CD8-positive, alpha-beta T cell (primary cell): ENCODE measurements at regions of chr7 and their contacts with region 1.

Region 1: GRCh38 chr7:30564243-30564892 is 30.3 kb upstream of the GARS1 start:
- DNase-seq: peak; percentile 60 to 83 (median 76)
- ATAC-seq: peak; percentile 95
- H3K4me3 ChIP-seq: no peak overlapping the region
- H3K4me3 Mint-ChIP-seq: no peak overlapping the region
- H3K27ac ChIP-seq: no peak overlapping the region
- H3K27ac Mint-ChIP-seq: peak overlapping the region; percentile 37
- H3K4me1 ChIP-seq: no peaks in the 10 kb centered on the region
- H3K4me1 Mint-ChIP-seq: no peaks in the 10 kb centered on the region
- H3K27me3 ChIP-seq: no peaks in the 10 kb centered on the region
- H3K27me3 Mint-ChIP-seq: no peaks in the 10 kb centered on the region
- CTCF ChIP-seq: peak; percentile 74

Region 2: DNA sequence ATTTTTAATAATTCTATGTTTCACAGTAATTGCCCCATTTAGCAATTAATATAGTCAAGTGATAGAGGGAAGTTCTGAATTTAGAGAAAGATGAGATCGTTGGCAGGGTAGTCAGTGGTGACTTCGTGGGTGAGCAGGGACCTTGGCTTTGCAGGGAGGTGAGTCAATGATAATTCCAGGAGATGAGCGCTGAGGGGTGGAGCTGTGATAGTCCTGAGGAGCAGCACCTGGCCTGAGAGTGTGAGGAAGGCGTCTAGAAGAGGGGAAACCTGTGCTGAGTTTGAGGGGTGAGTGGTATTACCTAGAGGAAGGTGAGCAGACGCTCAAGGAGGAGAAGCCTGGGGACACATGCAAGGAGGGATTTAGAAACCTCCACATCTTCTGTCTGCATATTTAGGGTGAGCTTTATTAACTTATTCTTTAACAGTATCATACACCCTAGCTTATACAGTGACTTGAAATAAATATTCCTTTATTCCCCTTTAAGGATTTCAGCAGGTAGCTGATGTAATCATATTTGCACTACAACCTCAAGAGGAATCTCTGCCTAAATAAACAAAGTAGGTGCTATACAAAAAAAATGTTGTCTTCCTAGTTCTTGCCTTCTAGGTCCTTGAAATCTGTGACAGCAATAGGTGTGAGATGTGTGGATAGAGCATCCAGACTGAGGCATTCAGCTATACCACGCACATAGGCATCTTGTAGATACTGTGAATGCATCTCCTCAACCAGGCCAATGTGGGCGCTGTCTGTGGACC is 1604.1 kb before region 1 on chr7:
- CTCF ChIA-PET with region 1: no interaction called
- POLR2A ChIA-PET with region 1: no interaction called
- intact Hi-C with region 1: loop called in 1 of 2 experiments (anchors 5 kb)
- DNase-seq: no peak
- ATAC-seq: no peak
- H3K4me3 ChIP-seq: no peak overlapping the region
- H3K4me3 Mint-ChIP-seq: no peak overlapping the region
- H3K27ac ChIP-seq: no peak overlapping the region
- H3K27ac Mint-ChIP-seq: no peak overlapping the region
- H3K4me1 ChIP-seq: peaks cover 6% of the 10 kb centered on the region
- H3K4me1 Mint-ChIP-seq: peaks cover 14% of the 10 kb centered on the region
- H3K27me3 ChIP-seq: peaks cover 5 to 14% of the 10 kb centered on the region in 2 experiments
- H3K27me3 Mint-ChIP-seq: peaks cover 32% of the 10 kb centered on the region
- CTCF ChIP-seq: no peak

Region 3: DNA sequence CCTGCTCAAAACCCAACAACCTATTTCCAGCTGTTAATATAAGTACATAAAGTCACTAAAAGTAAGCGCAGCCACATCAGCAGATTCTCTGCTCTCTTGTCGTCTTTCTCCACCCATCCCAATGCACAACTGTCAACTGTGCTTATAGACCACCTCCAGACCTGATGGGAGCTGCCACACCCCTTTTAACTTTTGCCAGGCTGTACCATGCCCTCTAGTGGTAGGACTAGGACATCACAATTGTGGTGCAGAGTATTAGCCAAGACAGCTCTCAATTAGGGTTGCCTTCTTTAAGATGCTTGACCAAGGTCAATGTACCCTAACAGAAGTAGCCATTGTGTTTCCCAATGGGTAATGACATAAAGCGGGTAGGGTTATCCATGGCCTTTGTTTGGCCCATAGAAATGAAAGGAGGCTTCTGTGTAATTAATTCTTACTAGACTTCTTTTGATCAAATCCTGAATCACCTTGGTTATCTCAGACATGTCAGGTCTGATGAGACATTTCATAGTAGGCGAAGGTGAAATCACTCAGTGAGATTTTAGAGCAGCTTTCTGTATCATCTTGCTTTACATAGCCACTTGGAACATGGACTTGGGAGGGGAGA is 642.9 kb before region 1 on chr7:
- CTCF ChIA-PET with region 1: no interaction called
- POLR2A ChIA-PET with region 1: no interaction called
- intact Hi-C with region 1: loop called (anchors 5 kb)
- DNase-seq: peak in 8 of 9 experiments; percentile 6 to 67 (median 40)
- ATAC-seq: peak; percentile 92
- H3K4me3 ChIP-seq: no peak overlapping the region
- H3K4me3 Mint-ChIP-seq: no peak overlapping the region
- H3K27ac ChIP-seq: no peak overlapping the region
- H3K27ac Mint-ChIP-seq: no peak overlapping the region
- H3K4me1 ChIP-seq: no peaks in the 10 kb centered on the region
- H3K4me1 Mint-ChIP-seq: no peaks in the 10 kb centered on the region
- H3K27me3 ChIP-seq: peaks cover 0 to 2% of the 10 kb centered on the region in 2 experiments
- H3K27me3 Mint-ChIP-seq: no peaks in the 10 kb centered on the region
- CTCF ChIP-seq: peak; percentile 90

Region 4: GRCh38 chr7:30164567-30164966 is 399.8 kb before region 1 on chr7:
- CTCF ChIA-PET with region 1: no interaction called
- POLR2A ChIA-PET with region 1: no interaction called
- intact Hi-C with region 1: loop called (anchors 2 to 5 kb)
- DNase-seq: peak in 2 of 9 experiments; percentile 40 to 53
- ATAC-seq: no peak
- H3K4me3 ChIP-seq: no peak overlapping the region
- H3K4me3 Mint-ChIP-seq: no peak overlapping the region
- H3K27ac ChIP-seq: no peak overlapping the region
- H3K27ac Mint-ChIP-seq: no peak overlapping the region
- H3K4me1 ChIP-seq: peaks cover 25% of the 10 kb centered on the region
- H3K4me1 Mint-ChIP-seq: peaks cover 32% of the 10 kb centered on the region
- H3K27me3 ChIP-seq: no peaks in the 10 kb centered on the region
- H3K27me3 Mint-ChIP-seq: no peaks in the 10 kb centered on the region
- CTCF ChIP-seq: peak; percentile 15

Region 5: DNA sequence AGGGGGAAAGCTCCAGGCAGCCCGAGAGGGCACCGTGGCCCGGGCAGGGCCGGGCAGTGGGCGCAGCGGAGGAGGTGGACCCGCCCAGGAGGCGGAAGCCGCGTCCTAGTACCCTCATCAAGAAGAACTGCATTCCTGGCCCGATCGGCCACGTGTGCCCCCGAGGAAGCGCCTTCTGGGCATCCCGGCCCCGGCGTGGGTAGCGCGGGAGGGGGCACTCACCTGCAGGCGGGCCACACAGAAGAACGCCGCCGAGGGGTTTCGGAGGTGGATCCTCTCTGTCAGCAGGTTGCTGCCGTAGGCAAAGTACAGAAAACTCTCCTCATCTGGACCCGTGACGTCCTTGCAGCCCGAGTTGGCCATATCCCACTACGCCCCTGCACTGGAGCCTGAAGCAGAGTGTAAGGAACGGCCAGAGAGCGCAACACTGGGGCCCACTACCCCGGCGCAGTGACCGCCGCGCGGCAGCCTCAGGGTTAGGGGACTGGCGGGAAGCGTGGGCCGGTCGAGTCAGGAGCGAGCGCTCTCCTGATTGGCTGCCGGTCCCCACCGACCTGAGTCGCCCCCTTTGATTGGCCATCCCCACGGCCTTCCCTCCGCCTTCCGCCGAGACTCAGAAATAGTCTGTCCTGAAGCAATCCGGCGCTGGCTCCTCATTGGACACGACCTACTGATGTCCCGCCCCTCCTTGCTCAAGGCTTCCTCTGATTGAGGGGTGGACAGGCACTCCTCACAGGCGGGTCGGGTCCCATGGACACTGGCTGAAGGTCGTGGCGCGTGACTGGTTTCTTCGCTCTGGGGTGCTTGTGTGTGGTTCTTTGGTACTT is 59.8 kb before region 1 on chr7 and contains the start of gene GGCT:
- CTCF ChIA-PET with region 1: interaction called, 6 read pairs
- POLR2A ChIA-PET with region 1: no interaction called
- intact Hi-C with region 1: loop called in 1 of 2 experiments (anchors 1 kb)
- DNase-seq: peak; percentile 90 to 98 (median 96)
- ATAC-seq: peak; percentile 97
- H3K4me3 ChIP-seq: peak within 1 kb of the TSS; percentile 80 to 98
- H3K4me3 Mint-ChIP-seq: peak within 1 kb of the TSS; percentile 95
- H3K27ac ChIP-seq: peak within 1 kb of the TSS; percentile 50 to 70
- H3K27ac Mint-ChIP-seq: peak within 1 kb of the TSS; percentile 94
- H3K4me1 ChIP-seq: peaks cover 23% of the 10 kb centered on the region
- H3K4me1 Mint-ChIP-seq: peaks cover 39% of the 10 kb centered on the region
- H3K27me3 ChIP-seq: no peaks in the 10 kb centered on the region
- H3K27me3 Mint-ChIP-seq: no peaks in the 10 kb centered on the region
- CTCF ChIP-seq: no peak
- total RNA-seq, gene GGCT: 5.9 to 6.1 TPM

Region 6: GRCh38 chr7:30548762-30549344 is 15.5 kb before region 1 on chr7:
- CTCF ChIA-PET with region 1: interaction called, 54 read pairs
- POLR2A ChIA-PET with region 1: interaction called, 3 read pairs
- intact Hi-C with region 1: no loop called
- DNase-seq: peak in 6 of 9 experiments; percentile 4 to 53 (median 40)
- ATAC-seq: peak; percentile 57
- H3K4me3 ChIP-seq: no peak overlapping the region
- H3K4me3 Mint-ChIP-seq: no peak overlapping the region
- H3K27ac ChIP-seq: no peak overlapping the region
- H3K27ac Mint-ChIP-seq: no peak overlapping the region
- H3K4me1 ChIP-seq: no peaks in the 10 kb centered on the region
- H3K4me1 Mint-ChIP-seq: no peaks in the 10 kb centered on the region
- H3K27me3 ChIP-seq: no peaks in the 10 kb centered on the region
- H3K27me3 Mint-ChIP-seq: no peaks in the 10 kb centered on the region
- CTCF ChIP-seq: peak; percentile 71